ENCODE measurements at regions of chr9 and their contacts with region 1.

Region 1: GRCh38 chr9:5375091-5375490 is 35.4 kb upstream of the RLN1 start:
- DNase-seq: peak; percentile 66
- H3K4me3 Mint-ChIP-seq: peak overlapping the region; percentile 45
- H3K27ac Mint-ChIP-seq: peak overlapping the region; percentile 68
- H3K4me1 Mint-ChIP-seq: peaks cover 25% of the 10 kb centered on the region
- H3K27me3 Mint-ChIP-seq: no peaks in the 10 kb centered on the region

Region 2: GRCh38 chr9:5364294-5365024 is 10.6 kb before region 1 on chr9:
- intact Hi-C with region 1: loop called (anchors 1 kb)
- DNase-seq: no peak
- H3K4me3 Mint-ChIP-seq: no peak overlapping the region
- H3K27ac Mint-ChIP-seq: peak overlapping the region; percentile 36
- H3K4me1 Mint-ChIP-seq: peaks cover 13% of the 10 kb centered on the region
- H3K27me3 Mint-ChIP-seq: no peaks in the 10 kb centered on the region

Region 3: GRCh38 chr9:5608298-5609225 is 233.5 kb after region 1 on chr9:
- intact Hi-C with region 1: loop called (anchors 5 kb)
- DNase-seq: no peak
- H3K4me3 Mint-ChIP-seq: peak overlapping the region; percentile 55
- H3K27ac Mint-ChIP-seq: peak overlapping the region; percentile 58
- H3K4me1 Mint-ChIP-seq: peaks cover 18% of the 10 kb centered on the region
- H3K27me3 Mint-ChIP-seq: no peaks in the 10 kb centered on the region

Measured in activated CD4-positive, alpha-beta T cell treated with anti-CD3 and anti-CD28 coated beads, Interleukin-2, amount 10 ng/mL, durations not matched to agents 24 days and 14 days (primary cell).